ENCODE measurements at regions of chr2 and their contacts with region 1.

Region 1: GRCh38 chr2:189412330-189412953 is 28.8 kb upstream of the WDR75 start:
- DNase-seq: peak; percentile 40
- ATAC-seq: peak; percentile 28
- H3K4me3 ChIP-seq: no peak overlapping the region
- H3K4me3 Mint-ChIP-seq: no peak overlapping the region
- H3K27ac ChIP-seq: no peak overlapping the region
- H3K27ac Mint-ChIP-seq: no peak overlapping the region
- H3K4me1 ChIP-seq: no peaks in the 10 kb centered on the region
- H3K4me1 Mint-ChIP-seq: no peaks in the 10 kb centered on the region
- H3K27me3 ChIP-seq: no peaks in the 10 kb centered on the region
- H3K27me3 Mint-ChIP-seq: no peaks in the 10 kb centered on the region
- CTCF ChIP-seq: peak; percentile 76

Region 2: DNA sequence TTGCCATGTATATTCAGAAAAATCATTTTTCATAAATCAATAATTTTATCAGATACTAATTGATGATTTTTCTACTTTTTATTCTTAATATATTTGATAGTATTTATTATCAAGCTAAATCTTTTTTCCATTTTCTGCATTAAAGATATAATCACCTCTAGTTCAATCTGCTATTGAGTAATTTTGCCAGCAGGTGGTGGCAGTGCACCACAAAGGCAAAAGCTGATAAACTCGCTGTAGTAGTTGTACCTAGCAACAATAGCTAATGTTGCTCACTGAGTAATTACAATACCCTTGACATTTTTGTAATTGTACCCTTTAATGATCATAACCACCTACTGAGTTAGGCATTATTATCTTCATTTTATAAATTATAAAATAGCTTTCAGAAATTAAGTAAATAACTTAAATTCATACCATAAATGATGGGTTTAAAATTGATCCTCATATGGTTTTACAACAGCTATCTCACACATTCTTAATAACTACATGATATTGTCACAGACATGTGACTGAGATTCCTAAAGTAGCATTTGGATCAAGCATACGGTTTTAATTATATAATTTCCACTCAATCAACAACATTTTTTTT is 1912.4 kb before region 1 on chr2:
- CTCF ChIA-PET with region 1: no interaction called
- POLR2A ChIA-PET with region 1: no interaction called
- intact Hi-C with region 1: loop called (anchors 5 kb)
- DNase-seq: peak; percentile 4
- ATAC-seq: no peak
- H3K4me3 ChIP-seq: no peak overlapping the region
- H3K4me3 Mint-ChIP-seq: no peak overlapping the region
- H3K27ac ChIP-seq: no peak overlapping the region
- H3K27ac Mint-ChIP-seq: no peak overlapping the region
- H3K4me1 ChIP-seq: no peaks in the 10 kb centered on the region
- H3K4me1 Mint-ChIP-seq: no peaks in the 10 kb centered on the region
- H3K27me3 ChIP-seq: no peaks in the 10 kb centered on the region
- H3K27me3 Mint-ChIP-seq: no peaks in the 10 kb centered on the region
- CTCF ChIP-seq: peak; percentile 40

Region 3: DNA sequence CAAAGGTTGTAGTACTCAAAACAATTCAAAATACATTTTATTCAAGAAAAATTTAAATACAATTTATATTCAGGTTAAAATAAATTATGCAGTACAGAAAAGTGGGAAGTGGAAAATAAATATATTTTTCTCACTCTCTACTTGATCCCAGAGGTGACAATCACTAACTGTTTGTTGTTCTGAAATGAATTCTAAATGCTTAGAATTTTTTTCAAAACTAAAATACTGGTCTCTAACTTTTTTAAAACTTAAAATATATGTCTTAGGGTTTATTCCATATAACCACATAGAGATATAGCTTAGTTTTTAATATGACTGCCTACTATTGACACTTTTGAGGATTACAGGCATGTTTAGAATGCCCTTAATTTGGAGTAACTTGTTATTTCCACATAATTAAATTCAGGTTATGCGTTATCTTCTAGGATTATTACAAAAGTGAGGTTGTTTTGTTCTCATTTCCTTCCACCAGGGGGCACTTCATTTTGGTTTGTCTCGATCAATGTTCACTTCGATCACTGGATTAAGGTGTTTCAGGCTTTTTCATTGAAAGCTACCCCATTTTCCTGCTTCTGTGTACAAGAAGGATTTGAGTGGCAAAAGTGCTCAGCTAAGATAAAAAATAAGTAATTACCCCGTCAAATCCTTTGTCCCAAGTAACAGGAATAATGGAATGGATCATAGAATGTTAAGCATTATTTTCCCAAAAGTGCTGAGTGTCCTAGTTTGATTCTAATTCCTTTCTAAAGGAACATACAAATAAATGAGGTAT is 1831.1 kb before region 1 on chr2:
- CTCF ChIA-PET with region 1: no interaction called
- POLR2A ChIA-PET with region 1: no interaction called
- intact Hi-C with region 1: loop called (anchors 5 kb)
- DNase-seq: peak; percentile 3
- ATAC-seq: no peak
- H3K4me3 ChIP-seq: no peak overlapping the region
- H3K4me3 Mint-ChIP-seq: no peak overlapping the region
- H3K27ac ChIP-seq: no peak overlapping the region
- H3K27ac Mint-ChIP-seq: no peak overlapping the region
- H3K4me1 ChIP-seq: no peaks in the 10 kb centered on the region
- H3K4me1 Mint-ChIP-seq: peaks cover 3% of the 10 kb centered on the region
- H3K27me3 ChIP-seq: no peaks in the 10 kb centered on the region
- H3K27me3 Mint-ChIP-seq: no peaks in the 10 kb centered on the region
- CTCF ChIP-seq: peak; percentile 54

Region 4: DNA sequence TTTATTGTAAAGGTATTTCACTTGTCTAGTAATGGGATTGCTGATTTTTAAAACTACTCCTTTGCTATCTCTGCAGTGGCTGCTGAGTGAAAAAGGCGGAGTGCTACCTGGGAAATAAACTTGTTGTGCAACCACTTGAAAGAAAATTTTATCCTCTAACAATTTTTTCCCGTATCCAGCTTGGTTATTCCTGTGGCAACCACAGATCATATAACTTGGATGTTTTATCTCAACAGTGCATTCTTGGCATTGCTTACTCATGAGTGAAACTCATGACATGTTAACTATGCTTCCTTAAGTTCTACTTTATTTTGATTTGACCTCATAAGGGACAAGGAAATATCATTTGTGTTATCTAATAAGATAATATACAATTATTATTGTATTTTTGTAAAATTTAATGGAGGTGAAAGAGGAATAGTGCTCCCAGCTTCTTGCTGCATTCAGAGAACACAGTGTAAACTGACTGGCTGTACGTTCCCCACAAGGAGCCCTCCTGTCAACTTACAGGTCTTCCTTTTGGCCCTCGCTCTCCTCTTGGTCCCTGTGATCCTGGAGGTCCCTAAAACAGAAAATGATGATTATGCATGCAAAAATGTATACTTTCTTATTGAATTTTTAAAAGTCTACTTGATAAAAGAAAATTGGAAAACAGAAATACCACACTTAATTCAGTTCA is 315.5 kb before region 1 on chr2:
- CTCF ChIA-PET with region 1: interaction called, 18 read pairs
- POLR2A ChIA-PET with region 1: no interaction called
- intact Hi-C with region 1: loop called (anchors 1 kb)
- DNase-seq: no peak
- ATAC-seq: no peak
- H3K4me3 ChIP-seq: no peak overlapping the region
- H3K4me3 Mint-ChIP-seq: no peak overlapping the region
- H3K27ac ChIP-seq: no peak overlapping the region
- H3K27ac Mint-ChIP-seq: no peak overlapping the region
- H3K4me1 ChIP-seq: no peaks in the 10 kb centered on the region
- H3K4me1 Mint-ChIP-seq: no peaks in the 10 kb centered on the region
- H3K27me3 ChIP-seq: no peaks in the 10 kb centered on the region
- H3K27me3 Mint-ChIP-seq: no peaks in the 10 kb centered on the region
- CTCF ChIP-seq: no peak